ENCODE measurements at regions of chr19 and their contacts with region 1.

Region 1: DNA sequence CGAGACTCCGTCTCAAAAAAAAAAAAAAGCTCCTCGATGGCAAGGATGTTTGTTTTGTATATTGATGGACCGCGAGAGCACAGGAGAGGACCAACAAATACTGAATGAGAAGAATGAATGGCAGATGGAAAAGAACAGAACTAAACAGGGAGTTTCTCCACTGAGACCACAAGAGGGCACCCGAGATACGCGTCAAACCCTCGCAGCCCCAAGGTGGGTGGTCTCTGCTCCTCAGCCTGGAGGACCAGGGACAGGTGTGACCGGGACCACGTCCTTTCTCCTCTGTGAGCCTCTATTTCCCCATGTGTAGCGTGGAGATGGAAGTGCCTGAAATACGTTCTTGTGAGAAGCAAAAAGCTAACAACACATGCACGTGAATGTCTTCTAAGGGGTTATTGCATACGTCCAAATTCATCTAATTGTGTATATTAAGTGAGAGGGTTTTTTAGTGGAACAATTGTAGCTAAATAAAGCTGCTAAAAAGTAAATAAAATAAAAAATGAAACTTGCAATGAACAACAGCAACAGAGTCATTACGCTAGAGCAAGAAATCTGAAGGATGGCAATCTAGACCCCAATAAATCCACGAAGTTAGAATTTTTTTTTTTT is 8.3 kb upstream of the CDC42EP5 start:
- DNase-seq: no peak
- ATAC-seq: peak; percentile 65
- H3K4me3 ChIP-seq: peak overlapping the region in 1 of 2 experiments; percentile 21; a peak in 1 of 4 replicates
- H3K27ac ChIP-seq: no peak overlapping the region
- H3K4me1 ChIP-seq: no peaks in the 10 kb centered on the region
- H3K27me3 ChIP-seq: no peaks in the 10 kb centered on the region
- CTCF ChIP-seq: peak; percentile 94

Region 2: GRCh38 chr19:54339646-54340358 is 141.6 kb before region 1 on chr19:
- CTCF ChIA-PET with region 1: no interaction called
- POLR2A ChIA-PET with region 1: no interaction called
- in situ Hi-C with region 1: no loop called
- intact Hi-C with region 1: no loop called
- DNase-seq: no peak
- ATAC-seq: no peak
- H3K4me3 ChIP-seq: no peak overlapping the region
- H3K27ac ChIP-seq: no peak overlapping the region
- H3K4me1 ChIP-seq: no peaks in the 10 kb centered on the region
- H3K27me3 ChIP-seq: no peaks in the 10 kb centered on the region
- CTCF ChIP-seq: no peak

Region 3: DNA sequence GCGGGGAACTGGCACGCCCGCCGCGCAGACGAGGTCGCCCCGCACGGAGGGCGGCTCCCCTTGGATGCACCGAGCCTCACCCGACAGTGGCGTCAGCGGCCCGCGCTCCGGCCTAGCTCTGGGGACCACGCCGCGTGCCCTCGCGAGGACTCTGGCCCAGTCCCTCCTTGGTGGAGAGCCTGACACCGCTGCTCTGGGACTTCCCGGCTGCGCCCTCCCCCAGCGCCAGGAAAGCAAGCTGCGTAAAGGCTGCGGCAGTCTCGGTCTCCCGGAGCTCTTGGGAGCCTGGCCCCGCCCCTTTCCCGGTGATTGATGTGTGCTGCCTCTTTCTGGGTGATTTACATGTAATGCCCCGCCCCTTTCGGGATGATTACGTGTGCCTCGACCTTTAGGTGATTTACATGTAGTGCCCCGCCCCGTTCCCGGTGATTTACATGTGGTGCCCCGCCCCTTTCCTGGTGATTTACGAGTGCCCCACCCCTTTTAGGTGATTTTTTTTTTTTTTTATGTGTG is 17.8 kb before region 1 on chr19 and contains the start of gene LENG9:
- CTCF ChIA-PET with region 1: interaction called, 13 read pairs
- POLR2A ChIA-PET with region 1: interaction called, 8 read pairs
- in situ Hi-C with region 1: no loop called
- intact Hi-C with region 1: no loop called
- DNase-seq: no peak
- ATAC-seq: peak; percentile 62
- H3K4me3 ChIP-seq: peak within 1 kb of the TSS; percentile 56 to 70
- H3K27ac ChIP-seq: peak within 1 kb of the TSS; percentile 87
- H3K4me1 ChIP-seq: peaks cover 26% of the 10 kb centered on the region
- H3K27me3 ChIP-seq: no peaks in the 10 kb centered on the region
- CTCF ChIP-seq: no peak
- total RNA-seq, gene LENG9: 5.1 TPM

Region 4: DNA sequence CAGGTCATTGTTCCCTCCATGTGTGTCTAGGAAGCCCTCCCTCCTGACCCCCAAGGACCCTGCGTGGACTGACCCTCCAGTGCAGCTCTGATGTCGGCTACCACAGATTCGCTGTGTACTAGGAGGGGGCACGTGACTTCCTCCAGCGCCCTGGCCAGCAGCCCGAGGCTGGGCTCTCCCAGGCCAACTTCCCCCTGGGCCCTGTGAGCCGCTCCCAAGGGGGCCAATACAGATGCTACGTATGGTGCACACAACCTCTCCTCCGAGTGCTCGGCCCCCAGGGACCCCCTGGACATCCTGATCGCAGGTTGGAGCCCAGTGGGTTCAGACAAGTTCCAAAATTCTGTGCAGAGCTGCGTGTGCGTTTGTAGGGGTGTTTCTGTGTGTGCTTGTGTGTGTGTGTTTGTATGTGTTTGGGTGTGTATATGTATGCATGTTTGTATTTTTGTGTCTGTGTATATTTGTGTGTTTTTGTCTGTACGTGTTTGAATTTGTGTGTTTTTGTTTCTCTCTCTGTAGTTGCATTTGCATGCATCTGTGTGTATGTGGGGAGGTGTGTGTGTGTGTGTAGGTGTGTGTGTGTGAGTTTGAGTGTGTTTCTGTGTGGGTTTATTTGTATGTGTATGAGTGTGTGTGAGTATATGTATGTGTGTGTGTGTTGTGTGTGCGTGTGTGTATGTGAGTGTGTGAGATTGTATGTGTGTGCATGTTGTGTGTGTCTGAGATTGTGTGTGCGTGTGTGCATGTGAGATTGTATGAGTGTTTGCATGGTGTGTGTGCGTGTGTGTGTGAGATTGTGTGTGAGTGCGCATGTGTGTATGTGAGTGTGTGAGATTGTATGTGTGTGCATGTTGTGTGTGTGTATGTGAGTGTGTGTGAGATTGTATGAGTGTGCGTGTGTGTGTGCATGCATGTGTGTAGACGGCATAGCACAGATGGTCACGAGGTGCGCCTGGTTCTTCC is 70.8 kb after region 1 on chr19:
- CTCF ChIA-PET with region 1: no interaction called
- POLR2A ChIA-PET with region 1: no interaction called
- in situ Hi-C with region 1: no loop called
- intact Hi-C with region 1: loop called (anchors 10 kb)
- DNase-seq: no peak
- ATAC-seq: 0 out of 2 replicates have a peak, but pooled peaks have one; percentile 17
- H3K4me3 ChIP-seq: no peak overlapping the region
- H3K27ac ChIP-seq: no peak overlapping the region
- H3K4me1 ChIP-seq: no peaks in the 10 kb centered on the region
- H3K27me3 ChIP-seq: peaks cover 13% of the 10 kb centered on the region
- CTCF ChIP-seq: no peak

Region 5: DNA sequence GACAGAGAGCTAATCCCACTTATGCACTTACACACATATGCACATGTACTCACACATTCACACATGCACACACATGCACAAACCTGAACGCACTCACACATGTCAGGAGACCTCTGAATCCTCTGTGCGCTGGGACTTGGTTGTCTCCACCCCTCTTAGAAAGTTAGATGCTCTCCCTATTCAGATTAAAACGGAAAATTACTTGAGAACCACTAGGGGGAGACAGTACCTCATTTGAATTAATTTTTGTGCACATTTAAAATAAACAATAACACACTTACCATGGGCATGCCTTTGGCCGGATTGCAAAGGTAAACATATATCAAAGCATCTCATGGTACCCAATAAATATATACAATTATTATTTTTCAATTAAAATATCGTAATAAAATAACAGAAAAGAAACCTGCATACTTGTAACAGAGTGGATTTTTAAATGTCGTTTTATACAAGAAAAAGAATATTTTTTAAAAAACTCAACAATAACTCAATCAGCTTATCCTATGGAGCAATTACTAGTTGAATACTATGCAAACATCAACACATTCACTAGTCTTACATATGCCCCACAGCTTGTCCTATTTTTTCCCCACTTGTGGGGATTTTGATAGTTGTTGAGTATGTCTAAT is 171.9 kb after region 1 on chr19:
- CTCF ChIA-PET with region 1: interaction called, 18 read pairs
- POLR2A ChIA-PET with region 1: interaction called, 14 read pairs
- in situ Hi-C with region 1: no loop called
- intact Hi-C with region 1: no loop called
- DNase-seq: peak; percentile 17
- ATAC-seq: peak; percentile 79
- H3K4me3 ChIP-seq: no peak overlapping the region
- H3K27ac ChIP-seq: no peak overlapping the region
- H3K4me1 ChIP-seq: no peaks in the 10 kb centered on the region
- H3K27me3 ChIP-seq: peaks cover 3% of the 10 kb centered on the region; the same call in 1 of the 2 replicates
- CTCF ChIP-seq: peak; percentile 87

Region 6: DNA sequence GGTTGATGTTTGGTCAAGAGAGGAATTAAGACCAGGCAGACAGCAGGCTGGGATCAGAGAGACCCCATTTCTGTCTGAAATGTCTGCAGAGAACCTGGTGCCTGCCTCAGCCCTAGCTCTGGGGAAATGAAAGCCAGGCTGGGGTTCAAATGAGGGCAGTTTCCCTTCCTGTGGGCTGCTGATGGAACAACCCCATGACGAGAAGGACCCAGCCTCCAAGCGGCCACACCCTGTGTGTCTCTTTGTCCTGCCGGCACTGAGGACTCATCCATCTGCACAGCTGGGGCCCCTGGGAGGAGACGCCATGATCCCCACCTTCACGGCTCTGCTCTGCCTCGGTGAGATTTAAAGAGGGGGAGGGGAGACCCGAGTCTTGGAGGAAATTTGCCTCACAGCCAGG is 181.3 kb after region 1 on chr19 and contains the start of gene LILRB4:
- CTCF ChIA-PET with region 1: interaction called, 12 read pairs
- POLR2A ChIA-PET with region 1: no interaction called
- in situ Hi-C with region 1: no loop called
- intact Hi-C with region 1: no loop called
- DNase-seq: no peak
- ATAC-seq: no peak
- H3K4me3 ChIP-seq: no peak within 1 kb of the TSS
- H3K27ac ChIP-seq: no peak within 1 kb of the TSS
- H3K4me1 ChIP-seq: no peaks in the 10 kb centered on the region
- H3K27me3 ChIP-seq: peaks cover 8% of the 10 kb centered on the region
- CTCF ChIP-seq: no peak
- total RNA-seq, gene LILRB4: not detected

Region 7: GRCh38 chr19:54674021-54674617 is 192.7 kb after region 1 on chr19:
- CTCF ChIA-PET with region 1: interaction called, 9 read pairs
- POLR2A ChIA-PET with region 1: no interaction called
- in situ Hi-C with region 1: no loop called
- intact Hi-C with region 1: loop called (anchors 5 kb)
- DNase-seq: peak; percentile 30
- ATAC-seq: peak; percentile 85
- H3K4me3 ChIP-seq: no peak overlapping the region
- H3K27ac ChIP-seq: no peak overlapping the region
- H3K4me1 ChIP-seq: no peaks in the 10 kb centered on the region
- H3K27me3 ChIP-seq: peaks cover 25% of the 10 kb centered on the region
- CTCF ChIP-seq: peak; percentile 92

Measured in Panc1 (cell line).